SK-N-SH (cell line): ENCODE measurements at regions of chr6 and their contacts with region 1.

Region 1: GRCh38 chr6:116268589-116269293 is 11.0 kb downstream of the TSPYL1 start:
- DNase-seq: peak; percentile 76
- H3K4me3 ChIP-seq: no peak overlapping the region; a peak in 1 of 4 replicates
- H3K27ac ChIP-seq: peak overlapping the region; percentile 42 to 63; a peak in 3 of 4 replicates
- H3K4me1 ChIP-seq: peaks cover 5 to 12% of the 10 kb centered on the region in 2 experiments; a peak in 3 of 4 replicates
- H3K27me3 ChIP-seq: no peaks in the 10 kb centered on the region
- CTCF ChIP-seq: peak; percentile 95
- EP300 ChIP-seq: peak in 1 of 2 experiments; percentile 20; a peak in 1 of 4 replicates
- RAD21 ChIP-seq: peak; percentile 84

Region 2: DNA sequence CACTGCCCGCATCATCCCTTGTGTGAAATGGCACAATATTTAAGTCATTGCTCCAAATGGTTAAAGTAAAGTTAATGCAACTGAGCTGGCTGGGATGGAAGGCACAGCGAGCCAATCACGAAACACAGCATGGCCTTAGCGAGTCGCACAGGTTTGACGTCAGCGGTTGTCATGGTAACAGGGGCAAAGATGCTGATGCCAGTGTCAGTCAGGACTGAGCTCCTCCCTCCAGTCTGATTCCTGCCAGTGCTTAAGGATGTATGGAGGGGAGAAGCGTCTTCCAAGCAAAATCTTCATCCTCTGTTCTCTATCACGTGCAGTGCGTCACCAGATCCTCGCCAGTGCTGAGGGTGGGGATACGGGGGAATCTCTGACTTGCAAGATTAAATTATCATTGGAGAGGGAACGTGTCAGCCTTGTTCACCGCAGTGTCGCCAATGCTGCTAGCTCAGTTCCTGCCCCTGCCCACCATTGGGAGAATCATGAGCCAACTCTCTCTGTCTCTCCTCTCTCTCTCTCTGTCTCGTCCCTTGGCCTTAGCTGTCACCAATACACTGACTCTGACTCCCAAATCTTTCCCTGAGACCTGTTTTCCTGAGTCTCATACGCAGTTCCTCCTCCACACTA is 39.3 kb before region 1 on chr6:
- CTCF ChIA-PET with region 1: interaction called, 10 read pairs
- POLR2A ChIA-PET with region 1: no interaction called
- DNase-seq: peak; percentile 84
- H3K4me3 ChIP-seq: peak overlapping the region; percentile 64 to 71
- H3K27ac ChIP-seq: peak overlapping the region; percentile 71 to 89
- H3K4me1 ChIP-seq: peaks cover 3 to 10% of the 10 kb centered on the region in 2 experiments; a peak in 2 of 4 replicates
- H3K27me3 ChIP-seq: no peaks in the 10 kb centered on the region
- CTCF ChIP-seq: no peak
- EP300 ChIP-seq: 0 out of 4 replicates have a peak, but pooled peaks of 1 of the 2 experiments have one; percentile 15
- RAD21 ChIP-seq: no peak

Region 3: GRCh38 chr6:116279260-116280063 is 10.7 kb after region 1 on chr6 and contains the start of gene TSPYL1:
- CTCF ChIA-PET with region 1: interaction called, 59 read pairs
- POLR2A ChIA-PET with region 1: interaction called, 8 read pairs
- DNase-seq: peak; percentile 91
- H3K4me3 ChIP-seq: peak within 1 kb of the TSS; percentile 62 to 82
- H3K27ac ChIP-seq: peak within 1 kb of the TSS; percentile 94 to 98
- H3K4me1 ChIP-seq: peaks cover 4 to 20% of the 10 kb centered on the region in 2 experiments; a peak in 2 of 4 replicates
- H3K27me3 ChIP-seq: no peaks in the 10 kb centered on the region
- CTCF ChIP-seq: peak; percentile 28
- EP300 ChIP-seq: peak in 1 of 2 experiments; percentile 72; a peak in 2 of 4 replicates
- RAD21 ChIP-seq: no peak
- polyA plus RNA-seq, gene TSPYL1: 27.9 and 31.7 TPM in 2 replicates

Region 4: DNA sequence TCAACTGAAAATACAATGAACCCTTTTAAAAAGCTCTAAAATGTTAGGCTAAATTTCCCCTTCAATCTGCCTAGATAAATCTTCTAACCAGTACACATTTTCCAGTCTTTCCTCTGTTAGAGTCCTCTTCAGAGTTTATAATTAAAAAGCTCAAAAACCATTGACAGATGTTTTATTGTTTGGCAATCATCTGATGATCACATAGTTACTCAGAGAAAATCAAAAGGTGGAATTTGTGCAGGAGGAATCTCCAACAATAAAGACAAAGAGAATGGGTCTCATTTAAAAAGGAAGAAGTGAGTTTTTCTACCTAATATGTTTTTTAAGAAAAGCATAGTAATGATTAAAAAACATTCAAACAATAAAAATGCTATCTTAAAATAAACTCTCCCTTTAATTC is 273.7 kb after region 1 on chr6:
- CTCF ChIA-PET with region 1: interaction called, 15 read pairs
- POLR2A ChIA-PET with region 1: no interaction called
- DNase-seq: no peak
- H3K4me3 ChIP-seq: no peak overlapping the region
- H3K27ac ChIP-seq: no peak overlapping the region
- H3K4me1 ChIP-seq: no peaks in the 10 kb centered on the region; a peak in 1 of 4 replicates
- H3K27me3 ChIP-seq: no peaks in the 10 kb centered on the region
- CTCF ChIP-seq: no peak
- EP300 ChIP-seq: no peak
- RAD21 ChIP-seq: no peak

Region 5: GRCh38 chr6:116570856-116571682 is 302.3 kb after region 1 on chr6 and contains the start of gene RWDD1:
- CTCF ChIA-PET with region 1: interaction called, 26 read pairs
- POLR2A ChIA-PET with region 1: interaction called, 3 read pairs
- DNase-seq: peak; percentile 97
- H3K4me3 ChIP-seq: peak within 1 kb of the TSS; percentile 97 to 98
- H3K27ac ChIP-seq: peak within 1 kb of the TSS; percentile 84 to 96
- H3K4me1 ChIP-seq: peaks cover 4 to 6% of the 10 kb centered on the region in 2 experiments; a peak in 3 of 4 replicates
- H3K27me3 ChIP-seq: no peaks in the 10 kb centered on the region
- CTCF ChIP-seq: no peak
- EP300 ChIP-seq: no peak
- RAD21 ChIP-seq: no peak
- polyA plus RNA-seq, gene RWDD1: 17.7 and 18.8 TPM in 2 replicates